Activated B cell treated with CpG ODN at 0.5 μM for 24 hours (primary cell): ENCODE measurements at regions of chr6 and their contacts with region 1.

Region 1: DNA sequence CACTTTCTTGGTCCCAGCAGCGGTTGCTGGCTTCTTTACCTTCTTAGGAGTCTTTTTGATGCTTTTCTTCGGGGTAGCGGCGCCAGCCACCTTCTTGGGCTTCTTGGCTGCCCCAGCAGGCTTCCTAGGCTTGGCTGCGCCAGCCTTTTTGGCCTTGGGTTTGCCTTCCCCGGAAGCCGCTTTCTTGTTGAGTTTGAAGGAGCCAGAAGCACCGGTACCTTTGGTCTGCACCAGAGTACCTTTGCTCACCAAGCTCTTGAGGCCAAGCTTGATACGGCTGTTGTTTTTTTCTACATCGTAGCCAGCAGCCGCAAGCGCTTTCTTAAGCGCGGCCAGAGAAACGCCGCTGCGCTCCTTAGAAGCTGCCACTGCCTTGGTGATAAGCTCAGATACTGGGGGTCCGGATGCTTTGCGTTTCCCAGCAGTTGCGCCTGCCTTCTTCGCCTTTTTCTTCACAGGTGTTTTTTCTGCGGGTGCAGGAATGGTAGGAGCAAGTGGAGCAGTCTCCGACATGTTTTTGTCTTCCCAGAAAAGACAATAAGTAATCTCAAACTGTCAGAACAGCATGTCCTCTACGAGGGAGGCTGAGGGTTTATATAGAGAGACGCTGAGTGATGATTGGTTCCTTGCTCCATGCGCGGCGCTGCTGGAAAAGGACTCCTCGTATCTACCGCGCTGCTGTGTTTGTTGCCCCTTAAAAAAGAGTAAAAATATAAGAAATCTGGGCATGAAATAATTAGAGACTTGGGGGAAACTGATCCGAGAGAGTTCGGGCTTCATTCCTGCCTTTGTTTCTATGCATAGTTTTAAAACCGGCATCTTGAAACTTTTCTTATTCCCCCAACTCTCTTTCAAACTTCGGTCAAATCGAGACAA is 130.3 kb upstream of the BTN3A2 start:
- DNase-seq: peak; percentile 49
- ATAC-seq: peak; percentile 77
- H3K4me3 Mint-ChIP-seq: peak overlapping the region; percentile 89
- H3K27ac Mint-ChIP-seq: peak overlapping the region; percentile 97
- H3K4me1 Mint-ChIP-seq: peaks cover 26% of the 10 kb centered on the region
- H3K27me3 Mint-ChIP-seq: no peaks in the 10 kb centered on the region
- CTCF ChIP-seq: no peak

Region 2: GRCh38 chr6:26031595-26032339 is 202.9 kb before region 1 on chr6:
- CTCF ChIA-PET with region 1: no interaction called
- POLR2A ChIA-PET with region 1: interaction called, 10 read pairs
- intact Hi-C with region 1: no loop called
- DNase-seq: peak; percentile 55
- ATAC-seq: peak; percentile 62
- H3K4me3 Mint-ChIP-seq: peak overlapping the region; percentile 93
- H3K27ac Mint-ChIP-seq: peak overlapping the region; percentile 98
- H3K4me1 Mint-ChIP-seq: peaks cover 40% of the 10 kb centered on the region
- H3K27me3 Mint-ChIP-seq: peaks cover 2% of the 10 kb centered on the region
- CTCF ChIP-seq: no peak

Region 3: DNA sequence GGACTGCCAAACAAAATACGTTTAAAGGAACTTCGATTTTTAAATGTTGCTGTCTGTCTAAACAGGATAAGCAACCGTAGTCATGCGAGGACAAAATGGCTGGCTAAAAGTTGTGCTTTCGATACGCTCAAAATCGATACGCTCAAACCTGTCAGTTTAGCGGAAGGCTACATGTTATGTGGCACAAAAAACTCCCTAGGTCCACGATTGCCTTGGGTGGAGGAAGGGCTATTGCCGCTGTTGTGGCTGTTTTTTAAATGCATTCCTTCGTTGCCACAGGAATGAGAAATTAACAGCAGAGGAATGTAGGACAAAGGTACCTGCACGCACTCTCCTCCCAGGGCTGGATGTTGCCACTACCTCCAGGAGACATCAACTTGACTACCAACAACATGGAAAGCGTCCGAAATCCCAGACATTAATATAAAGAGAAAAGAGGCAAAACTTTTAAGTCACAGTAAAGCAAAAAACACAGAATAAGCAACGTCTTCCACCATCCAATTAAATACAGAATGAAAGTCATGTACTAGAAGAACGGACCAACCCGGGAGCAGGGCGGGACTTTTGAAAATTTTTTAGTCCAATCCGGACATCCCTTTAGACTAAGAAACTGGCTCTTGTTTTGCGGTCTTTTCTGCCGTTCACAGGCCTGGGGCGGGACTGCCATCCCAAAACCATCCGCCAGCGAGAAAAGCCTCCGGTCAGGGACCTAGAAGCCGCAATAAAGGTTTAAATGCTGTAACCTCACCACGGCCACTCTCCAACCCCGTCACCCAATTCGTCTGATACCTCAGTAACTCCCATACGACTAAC is 179.6 kb before region 1 on chr6:
- CTCF ChIA-PET with region 1: no interaction called
- POLR2A ChIA-PET with region 1: interaction called, 22 read pairs
- intact Hi-C with region 1: no loop called
- DNase-seq: peak; percentile 63
- ATAC-seq: peak; percentile 65
- H3K4me3 Mint-ChIP-seq: peak overlapping the region; percentile 97
- H3K27ac Mint-ChIP-seq: peak overlapping the region; percentile 100
- H3K4me1 Mint-ChIP-seq: peaks cover 20% of the 10 kb centered on the region
- H3K27me3 Mint-ChIP-seq: no peaks in the 10 kb centered on the region
- CTCF ChIP-seq: no peak

Region 4: DNA sequence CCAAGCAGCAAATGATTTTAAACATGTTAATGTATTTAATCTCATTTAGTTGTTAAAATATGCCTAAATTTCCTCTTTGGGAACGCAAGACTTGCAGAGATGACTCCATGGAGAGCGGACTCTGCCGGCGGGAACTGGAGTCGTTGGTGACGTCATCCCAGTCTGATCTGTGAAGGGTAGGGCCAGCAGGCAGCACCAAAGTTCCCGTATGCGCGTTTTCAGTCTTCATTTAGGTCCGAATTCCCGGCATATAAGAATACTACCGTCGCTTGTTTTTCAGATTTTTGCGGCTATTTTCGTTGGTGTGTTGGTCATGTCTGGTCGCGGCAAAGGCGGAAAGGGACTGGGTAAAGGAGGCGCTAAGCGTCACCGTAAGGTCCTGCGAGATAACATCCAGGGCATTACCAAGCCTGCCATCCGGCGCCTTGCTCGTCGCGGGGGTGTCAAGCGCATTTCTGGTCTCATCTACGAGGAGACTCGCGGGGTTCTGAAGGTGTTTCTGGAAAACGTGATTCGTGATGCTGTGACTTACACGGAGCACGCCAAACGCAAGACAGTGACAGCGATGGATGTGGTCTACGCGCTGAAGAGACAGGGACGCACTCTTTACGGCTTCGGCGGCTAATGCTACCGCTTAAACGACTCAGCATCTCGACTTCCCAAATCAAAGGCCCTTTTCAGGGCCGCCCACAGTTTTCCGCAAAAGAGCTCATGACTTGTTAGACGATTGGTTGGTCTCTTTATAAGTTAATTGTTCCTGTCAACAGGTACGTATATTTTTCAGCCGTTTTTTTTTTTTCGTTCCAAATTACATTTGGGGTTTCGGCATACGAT is 30.1 kb before region 1 on chr6:
- CTCF ChIA-PET with region 1: interaction called, 5 read pairs
- POLR2A ChIA-PET with region 1: interaction called, 340 read pairs
- intact Hi-C with region 1: loop called (anchors 1 kb)
- DNase-seq: peak; percentile 70
- ATAC-seq: peak; percentile 59
- H3K4me3 Mint-ChIP-seq: no peak overlapping the region
- H3K27ac Mint-ChIP-seq: no peak overlapping the region
- H3K4me1 Mint-ChIP-seq: peaks cover 30% of the 10 kb centered on the region
- H3K27me3 Mint-ChIP-seq: peaks cover 2% of the 10 kb centered on the region
- CTCF ChIP-seq: no peak

Region 5: GRCh38 chr6:26249957-26250697 is 15.5 kb after region 1 on chr6:
- CTCF ChIA-PET with region 1: interaction called, 23 read pairs
- POLR2A ChIA-PET with region 1: interaction called, 158 read pairs
- intact Hi-C with region 1: loop called (anchors 1 kb)
- DNase-seq: peak; percentile 57
- ATAC-seq: peak; percentile 63
- H3K4me3 Mint-ChIP-seq: peak overlapping the region; percentile 94
- H3K27ac Mint-ChIP-seq: peak overlapping the region; percentile 90
- H3K4me1 Mint-ChIP-seq: peaks cover 36% of the 10 kb centered on the region
- H3K27me3 Mint-ChIP-seq: no peaks in the 10 kb centered on the region
- CTCF ChIP-seq: no peak

Region 6: DNA sequence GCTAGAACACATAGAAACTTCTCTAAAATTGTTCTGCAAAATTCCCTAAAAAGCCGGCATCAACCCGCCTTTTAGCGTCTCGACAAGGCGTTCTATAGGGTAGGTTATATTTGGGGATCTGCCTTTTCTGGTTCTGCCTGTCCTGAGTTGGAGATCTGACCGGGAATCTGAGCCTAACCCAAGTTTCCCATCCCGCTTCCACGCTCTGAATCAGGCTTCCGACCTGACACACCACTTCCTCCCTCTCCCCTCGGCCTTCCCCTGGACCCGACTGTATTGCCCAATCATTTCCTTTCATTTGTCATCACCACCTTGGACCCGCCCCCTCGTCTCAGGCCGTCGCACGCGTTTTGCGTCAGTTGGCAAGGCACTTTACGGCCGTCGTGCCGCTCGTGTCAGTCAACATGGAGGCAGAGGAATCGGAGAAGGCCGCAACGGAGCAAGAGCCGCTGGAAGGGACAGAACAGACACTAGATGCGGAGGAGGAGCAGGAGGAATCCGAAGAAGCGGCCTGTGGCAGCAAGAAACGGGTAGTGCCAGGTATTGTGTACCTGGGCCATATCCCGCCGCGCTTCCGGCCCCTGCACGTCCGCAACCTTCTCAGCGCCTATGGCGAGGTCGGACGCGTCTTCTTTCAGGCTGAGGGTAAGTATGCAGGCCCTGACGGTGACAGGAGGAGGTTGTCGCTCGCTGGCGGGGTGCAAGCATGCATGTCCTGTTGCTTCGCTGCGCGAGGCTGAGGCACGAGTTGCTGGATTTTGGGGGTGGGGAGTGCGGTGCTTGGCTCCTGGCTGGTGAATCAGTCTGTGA is 362.1 kb after region 1 on chr6 and contains the start of gene ABT1:
- CTCF ChIA-PET with region 1: no interaction called
- POLR2A ChIA-PET with region 1: interaction called, 11 read pairs
- intact Hi-C with region 1: no loop called
- DNase-seq: peak; percentile 91
- ATAC-seq: peak; percentile 90
- H3K4me3 Mint-ChIP-seq: no peak within 1 kb of the TSS
- H3K27ac Mint-ChIP-seq: no peak within 1 kb of the TSS
- H3K4me1 Mint-ChIP-seq: peaks cover 17% of the 10 kb centered on the region
- H3K27me3 Mint-ChIP-seq: peaks cover 5% of the 10 kb centered on the region
- CTCF ChIP-seq: no peak
- total RNA-seq, gene ABT1: 30.7 and 30.8 TPM in 2 replicates